ENCODE measurements at regions of chr5 and their contacts with region 1.

Region 1: GRCh38 chr5:135560858-135561257 is 17.9 kb downstream of the CXCL14 start:
- DNase-seq: peak; percentile 89 to 92 (median 90)
- H3K4me3 ChIP-seq: no peak overlapping the region
- H3K27ac ChIP-seq: no peak overlapping the region
- H3K4me1 ChIP-seq: peaks cover 0 to 6% (median 1%) of the 10 kb centered on the region in 4 experiments
- H3K27me3 ChIP-seq: peaks cover 5 to 36% (median 21%) of the 10 kb centered on the region in 5 experiments

Region 2: GRCh38 chr5:135615581-135616260 is 54.9 kb after region 1 on chr5:
- CTCF ChIA-PET with region 1: no interaction called
- POLR2A ChIA-PET with region 1: no interaction called
- DNase-seq: no peak
- H3K4me3 ChIP-seq: no peak overlapping the region
- H3K27ac ChIP-seq: no peak overlapping the region
- H3K4me1 ChIP-seq: no peaks in the 10 kb centered on the region
- H3K27me3 ChIP-seq: peaks cover 0 to 8% (median 0%) of the 10 kb centered on the region in 5 experiments

Region 3: DNA sequence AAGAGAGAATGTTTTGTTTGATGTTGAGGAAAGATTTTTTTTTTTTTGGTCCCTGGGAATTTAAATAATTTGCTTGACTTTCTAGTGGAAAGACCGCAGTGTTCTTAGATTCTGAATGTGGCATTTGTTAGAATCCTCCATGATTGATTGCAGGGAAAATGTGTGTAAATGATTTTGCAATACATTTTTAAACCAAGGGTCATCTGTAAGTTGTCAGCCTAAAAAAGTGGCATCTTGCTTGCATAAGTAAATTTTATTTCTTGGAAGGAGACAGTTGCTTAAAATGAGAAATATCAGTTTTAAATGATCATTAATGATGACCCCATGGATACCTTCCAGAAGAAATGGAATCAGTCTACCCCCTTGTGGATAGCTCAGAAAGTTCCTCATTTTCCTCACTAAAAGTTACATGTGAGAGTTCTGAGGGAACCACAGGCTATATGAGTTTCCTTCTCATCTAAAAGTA is 168.5 kb after region 1 on chr5:
- CTCF ChIA-PET with region 1: interaction called, 18 read pairs
- POLR2A ChIA-PET with region 1: no interaction called
- DNase-seq: peak; percentile 13 to 38 (median 35)
- H3K4me3 ChIP-seq: no peak overlapping the region
- H3K27ac ChIP-seq: no peak overlapping the region
- H3K4me1 ChIP-seq: no peaks in the 10 kb centered on the region
- H3K27me3 ChIP-seq: peaks cover 0 to 1% (median 0%) of the 10 kb centered on the region in 5 experiments

Region 4: GRCh38 chr5:135829681-135830383 is 269.0 kb after region 1 on chr5:
- CTCF ChIA-PET with region 1: interaction called, 113 read pairs
- POLR2A ChIA-PET with region 1: interaction called, 3 read pairs
- DNase-seq: peak; percentile 60 to 81 (median 73)
- H3K4me3 ChIP-seq: no peak overlapping the region
- H3K27ac ChIP-seq: no peak overlapping the region
- H3K4me1 ChIP-seq: peaks cover 0 to 8% (median 6%) of the 10 kb centered on the region in 4 experiments
- H3K27me3 ChIP-seq: peaks cover 0 to 36% (median 28%) of the 10 kb centered on the region in 5 experiments